HEK293 (cell line): ENCODE measurements at regions of chr4 and their contacts with region 1.

Region 1: DNA sequence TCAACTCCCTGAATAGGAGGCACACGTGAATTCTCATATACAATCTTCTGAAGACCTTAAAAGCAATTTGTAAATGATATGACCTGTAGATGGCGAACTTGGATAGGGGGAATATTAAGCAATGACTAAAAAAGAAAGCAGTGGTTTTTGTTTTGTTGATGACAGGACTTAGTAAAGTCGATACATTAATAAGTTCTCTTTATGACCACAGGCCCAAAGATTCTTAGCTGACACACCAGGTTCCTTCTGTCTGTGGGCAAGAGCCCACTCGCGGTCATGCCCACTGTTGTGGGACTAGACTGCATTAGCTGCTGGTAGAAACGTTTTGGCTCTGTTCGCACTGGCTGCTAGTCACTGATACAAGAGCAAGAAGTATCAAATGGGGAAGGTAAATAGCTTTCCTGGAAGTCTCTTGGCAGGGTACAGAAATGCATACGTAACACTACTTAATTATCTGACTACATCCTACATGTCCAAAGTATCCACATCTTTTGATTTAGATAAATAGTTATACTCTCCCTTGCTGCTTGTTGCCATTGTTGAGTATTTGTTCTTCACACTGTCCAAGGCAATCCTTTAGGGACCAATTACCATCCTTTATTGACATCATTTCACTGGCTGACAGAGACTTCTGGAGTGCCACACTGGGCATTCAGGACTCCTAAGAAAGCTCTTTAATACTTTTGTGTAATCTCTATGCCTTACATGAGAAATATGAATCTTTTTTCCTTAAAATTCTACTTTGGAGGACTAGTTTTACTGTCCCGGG is 31.0 kb downstream of the ALPK1 start:
- H3K4me3 ChIP-seq: no peak overlapping the region
- H3K27ac ChIP-seq: no peak overlapping the region
- H3K4me1 ChIP-seq: no peaks in the 10 kb centered on the region
- CTCF ChIP-seq: no peak; the same call in 1 of the 2 replicates

Region 2: GRCh38 chr4:112523764-112524505 is 195.8 kb after region 1 on chr4:
- CTCF ChIA-PET with region 1: interaction called, 32 read pairs
- POLR2A ChIA-PET with region 1: no interaction called
- H3K4me3 ChIP-seq: peak overlapping the region; percentile 11
- H3K27ac ChIP-seq: no peak overlapping the region
- H3K4me1 ChIP-seq: no peaks in the 10 kb centered on the region
- CTCF ChIP-seq: peak; percentile 71

Region 3: GRCh38 chr4:112604589-112604988 is 276.4 kb after region 1 on chr4:
- CTCF ChIA-PET with region 1: interaction called, 15 read pairs
- POLR2A ChIA-PET with region 1: no interaction called
- H3K4me3 ChIP-seq: no peak overlapping the region
- H3K27ac ChIP-seq: no peak overlapping the region
- H3K4me1 ChIP-seq: no peaks in the 10 kb centered on the region
- CTCF ChIP-seq: no peak